ENCODE measurements at regions of chr1 and their contacts with region 1.

Region 1: GRCh38 chr1:10507111-10507879 is 32.5 kb downstream of the PEX14 start:
- ATAC-seq: peak; percentile 76 to 95 (median 79)
- H3K4me3 ChIP-seq: no peak overlapping the region
- H3K27ac ChIP-seq: no peak overlapping the region
- H3K4me1 ChIP-seq: peaks cover 24% of the 10 kb centered on the region in 2 donors

Region 2: GRCh38 chr1:10402729-10403274 is 104.5 kb before region 1 on chr1:
- in situ Hi-C with region 1: no loop called
- ATAC-seq: no peak
- H3K4me3 ChIP-seq: no peak overlapping the region
- H3K27ac ChIP-seq: no peak overlapping the region
- H3K4me1 ChIP-seq: peaks cover 10 to 13% of the 10 kb centered on the region in 2 donors

Region 3: GRCh38 chr1:10867138-10867721 is 359.9 kb after region 1 on chr1:
- in situ Hi-C with region 1: loop called in 3 of 9 experiments (anchors 25 kb)
- ATAC-seq: peak; percentile 74 to 96 (median 84)
- H3K4me3 ChIP-seq: peak overlapping the region; percentile 30 to 49 (median 34)
- H3K27ac ChIP-seq: peak overlapping the region; percentile 67 to 88
- H3K4me1 ChIP-seq: peaks cover 61 to 67% of the 10 kb centered on the region in 2 donors

Region 4: DNA sequence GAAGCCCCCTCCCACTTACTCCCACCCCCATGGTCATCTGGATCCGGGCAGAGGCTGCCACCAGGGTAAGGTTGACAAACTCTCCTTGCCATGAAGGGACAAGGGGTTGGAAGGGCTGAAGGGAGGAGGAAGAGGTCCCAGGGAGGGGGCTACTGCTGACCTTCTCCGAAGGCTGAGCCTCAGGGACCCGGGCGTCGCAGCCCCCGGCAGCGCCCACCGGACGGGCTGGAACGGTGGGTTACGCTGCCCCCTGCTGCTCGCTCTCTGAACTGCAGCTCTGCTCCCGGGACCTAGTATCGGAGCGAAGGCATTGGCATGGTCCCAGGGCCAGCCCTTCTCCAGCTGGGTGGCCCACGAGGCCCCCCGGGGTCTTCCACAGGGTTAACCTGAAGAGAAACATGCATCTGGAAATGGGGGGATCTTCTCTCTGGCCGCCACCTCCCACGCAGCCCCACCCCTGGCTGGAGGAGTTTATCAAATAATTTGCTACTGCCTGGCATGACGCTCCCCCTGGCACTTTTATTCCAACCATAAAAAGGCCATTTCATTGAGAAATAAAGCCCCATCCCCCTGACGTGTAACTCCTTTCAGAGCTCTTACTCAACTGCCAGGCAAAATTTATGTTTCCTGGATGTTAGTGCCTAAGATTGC is 434.7 kb after region 1 on chr1:
- in situ Hi-C with region 1: loop called in 4 of 9 experiments (anchors 25 kb)
- ATAC-seq: peak; percentile 16 to 67 (median 54)
- H3K4me3 ChIP-seq: peak overlapping the region in 1 of 5 donors; percentile 3
- H3K27ac ChIP-seq: no peak overlapping the region
- H3K4me1 ChIP-seq: peaks cover 21 to 27% of the 10 kb centered on the region in 2 donors

Region 5: DNA sequence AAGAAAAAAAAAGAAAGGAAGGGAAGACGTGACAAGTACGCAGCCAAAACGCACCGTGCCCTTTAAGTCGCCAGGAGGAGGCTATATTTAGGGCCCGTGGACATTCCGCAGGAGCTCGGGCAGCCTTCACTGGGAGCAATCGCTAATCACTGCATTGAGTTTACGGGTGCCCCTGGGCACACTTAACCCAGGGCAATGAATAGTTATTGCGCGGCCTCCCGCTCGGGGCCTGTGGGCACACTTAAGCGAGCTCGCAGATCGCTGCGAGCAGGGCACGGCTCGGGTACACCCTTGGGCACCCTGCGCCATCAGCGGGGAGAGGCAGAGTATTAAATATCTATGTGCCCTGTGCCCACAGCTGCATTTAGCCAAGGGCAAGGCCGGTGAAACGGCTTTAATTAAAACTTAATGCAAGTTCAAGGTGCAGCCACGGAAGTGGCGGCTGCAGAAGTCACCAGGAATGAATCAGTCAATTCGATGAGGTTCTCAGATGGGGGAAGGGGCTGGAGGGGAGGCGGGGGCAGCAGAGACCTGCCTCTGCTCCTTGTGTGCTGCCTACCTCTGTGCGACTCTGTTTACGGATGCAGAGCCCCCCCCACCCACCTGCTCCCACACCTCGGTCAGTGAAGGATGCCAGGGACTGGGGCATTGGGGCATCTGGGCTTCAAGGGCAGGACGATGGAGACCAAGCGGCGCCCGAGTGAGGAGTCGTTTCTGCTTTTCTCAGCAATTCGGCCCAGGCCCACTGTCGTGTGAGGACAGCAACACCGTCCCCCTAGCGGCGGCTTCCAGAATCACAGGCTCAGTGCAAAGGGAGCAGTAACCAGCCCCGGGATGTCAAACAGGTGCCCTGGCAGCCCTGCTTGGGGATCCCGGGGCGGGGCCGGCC is 453.4 kb after region 1 on chr1:
- in situ Hi-C with region 1: loop called in 1 of 9 experiments (anchors 25 kb)
- ATAC-seq: peak; percentile 85 to 100 (median 92)
- H3K4me3 ChIP-seq: no peak overlapping the region
- H3K27ac ChIP-seq: no peak overlapping the region
- H3K4me1 ChIP-seq: peaks cover 0 to 3% of the 10 kb centered on the region in 2 donors

Measured in motor neuron (in vitro differentiated cells).